Mammary epithelial cell (primary cell): ENCODE measurements at regions of chr1 and their contacts with region 1.

Region 1: GRCh38 chr1:26035959-26036755 is 9.8 kb downstream of the SLC30A2 start:
- DNase-seq: peak; percentile 60
- H3K4me3 ChIP-seq: peak overlapping the region; percentile 75 to 91 (median 90)
- H3K27ac ChIP-seq: no peak overlapping the region
- H3K4me1 ChIP-seq: peaks cover 20% of the 10 kb centered on the region
- H3K27me3 ChIP-seq: no peaks in the 10 kb centered on the region
- CTCF ChIP-seq: peak; percentile 88 to 97

Region 2: GRCh38 chr1:25895365-25895993 is 140.7 kb before region 1 on chr1:
- CTCF ChIA-PET with region 1: interaction called, 3 read pairs
- dilution Hi-C with region 1: no loop called
- in situ Hi-C with region 1: no loop called
- intact Hi-C with region 1: loop called (anchors 1 kb)
- DNase-seq: peak; percentile 77
- H3K4me3 ChIP-seq: no peak overlapping the region
- H3K27ac ChIP-seq: no peak overlapping the region
- H3K4me1 ChIP-seq: peaks cover 35% of the 10 kb centered on the region
- H3K27me3 ChIP-seq: no peaks in the 10 kb centered on the region
- CTCF ChIP-seq: peak; percentile 97 to 99

Region 3: GRCh38 chr1:26102526-26102925 is 66.4 kb after region 1 on chr1:
- CTCF ChIA-PET with region 1: interaction called, 25 read pairs
- dilution Hi-C with region 1: loop called (anchors 5 kb)
- in situ Hi-C with region 1: no loop called
- intact Hi-C with region 1: loop called (anchors 2 kb)
- DNase-seq: no peak
- H3K4me3 ChIP-seq: no peak overlapping the region
- H3K27ac ChIP-seq: no peak overlapping the region
- H3K4me1 ChIP-seq: peaks cover 6% of the 10 kb centered on the region
- H3K27me3 ChIP-seq: peaks cover 2% of the 10 kb centered on the region
- CTCF ChIP-seq: no peak

Region 4: GRCh38 chr1:26161415-26162219 is 125.5 kb after region 1 on chr1:
- CTCF ChIA-PET with region 1: no interaction called
- dilution Hi-C with region 1: no loop called
- in situ Hi-C with region 1: loop called in 1 of 2 experiments (anchors 25 kb)
- intact Hi-C with region 1: loop called (anchors 1 kb)
- DNase-seq: peak; percentile 47
- H3K4me3 ChIP-seq: peak overlapping the region; percentile 27 to 47 (median 43)
- H3K27ac ChIP-seq: no peak overlapping the region
- H3K4me1 ChIP-seq: peaks cover 23% of the 10 kb centered on the region
- H3K27me3 ChIP-seq: no peaks in the 10 kb centered on the region
- CTCF ChIP-seq: peak in 1 of 2 donors; percentile 2

Region 5: GRCh38 chr1:26233903-26234643 is 197.9 kb after region 1 on chr1 and contains the start of gene CEP85:
- CTCF ChIA-PET with region 1: no interaction called
- dilution Hi-C with region 1: no loop called
- in situ Hi-C with region 1: no loop called
- intact Hi-C with region 1: loop called (anchors 5 kb)
- DNase-seq: peak; percentile 97
- H3K4me3 ChIP-seq: peak within 1 kb of the TSS; percentile 79 to 97 (median 87)
- H3K27ac ChIP-seq: peak within 1 kb of the TSS; percentile 66
- H3K4me1 ChIP-seq: peaks cover 16% of the 10 kb centered on the region
- H3K27me3 ChIP-seq: no peaks in the 10 kb centered on the region
- CTCF ChIP-seq: peak; percentile 88 to 96
- total RNA-seq, gene CEP85: 14.3 to 16.9 TPM

Region 6: GRCh38 chr1:26391450-26391849 is 355.3 kb after region 1 on chr1:
- CTCF ChIA-PET with region 1: no interaction called
- dilution Hi-C with region 1: no loop called
- in situ Hi-C with region 1: no loop called
- intact Hi-C with region 1: loop called (anchors 1 kb)
- DNase-seq: peak; percentile 48
- H3K4me3 ChIP-seq: no peak overlapping the region
- H3K27ac ChIP-seq: no peak overlapping the region
- H3K4me1 ChIP-seq: peaks cover 4% of the 10 kb centered on the region
- H3K27me3 ChIP-seq: no peaks in the 10 kb centered on the region
- CTCF ChIP-seq: peak; percentile 91 to 97